HEK293 (cell line): ENCODE measurements at regions of chr16 and their contacts with region 1.

Region 1: DNA sequence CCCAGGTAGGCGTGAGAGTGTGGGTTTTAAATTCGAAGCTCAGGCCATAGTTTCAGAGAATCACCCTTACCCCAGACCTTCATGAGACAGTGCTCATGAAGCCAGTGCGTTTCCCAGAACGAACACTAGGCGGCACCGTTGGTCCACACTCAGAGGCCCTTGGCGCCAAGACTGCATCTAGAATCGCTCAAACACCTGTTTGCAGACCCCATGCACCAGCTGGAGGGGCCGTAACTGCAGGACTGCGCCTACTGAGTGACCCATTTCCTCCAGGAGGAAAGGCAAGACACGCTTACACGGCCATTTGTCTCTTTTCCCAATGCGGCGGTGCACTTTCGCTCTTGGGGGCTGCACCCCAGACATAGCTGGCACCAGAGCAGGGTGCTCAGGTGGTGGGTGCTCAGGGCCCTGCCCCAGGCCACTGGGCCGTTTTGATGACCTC is 34.0 kb downstream of the ADGRG5 start:
- H3K4me3 ChIP-seq: no peak overlapping the region
- H3K27ac ChIP-seq: no peak overlapping the region
- H3K4me1 ChIP-seq: no peaks in the 10 kb centered on the region
- CTCF ChIP-seq: peak; percentile 93

Region 2: DNA sequence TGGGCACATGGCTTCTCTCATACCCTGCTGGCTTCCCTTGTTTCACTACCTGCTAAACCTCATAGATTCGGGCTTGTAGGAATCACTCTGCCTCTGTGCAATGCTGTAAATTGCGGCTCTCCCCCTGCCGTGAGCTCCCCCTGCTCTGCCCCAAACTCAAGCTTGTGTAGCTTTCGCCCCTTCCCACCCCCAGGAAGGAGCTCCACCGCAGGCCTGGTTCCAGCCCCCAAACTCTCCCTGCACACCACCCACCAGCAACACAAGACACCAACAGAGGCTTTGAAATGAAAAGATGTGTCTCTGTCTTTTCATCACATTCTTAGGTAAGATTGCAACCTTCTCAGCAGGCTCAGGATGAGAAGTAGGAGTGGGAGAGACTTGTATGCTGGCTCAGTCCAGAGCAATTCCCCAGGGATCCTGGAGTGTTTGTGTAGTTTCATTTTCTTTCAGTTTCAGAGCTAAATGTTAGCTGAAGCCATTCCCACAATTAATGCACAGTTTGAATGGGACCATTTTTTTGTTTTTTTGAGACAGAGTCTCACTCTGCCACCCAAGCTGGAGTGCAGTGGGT is 190.0 kb before region 1 on chr16:
- CTCF ChIA-PET with region 1: no interaction called
- POLR2A ChIA-PET with region 1: no interaction called
- H3K4me3 ChIP-seq: no peak overlapping the region
- H3K27ac ChIP-seq: no peak overlapping the region
- H3K4me1 ChIP-seq: no peaks in the 10 kb centered on the region
- CTCF ChIP-seq: no peak

Region 3: GRCh38 chr16:57555831-57556230 is 20.6 kb before region 1 on chr16:
- CTCF ChIA-PET with region 1: interaction called, 11 read pairs
- POLR2A ChIA-PET with region 1: no interaction called
- H3K4me3 ChIP-seq: no peak overlapping the region
- H3K27ac ChIP-seq: no peak overlapping the region
- H3K4me1 ChIP-seq: no peaks in the 10 kb centered on the region
- CTCF ChIP-seq: no peak

Region 4: GRCh38 chr16:57564571-57565270 is 11.7 kb before region 1 on chr16:
- CTCF ChIA-PET with region 1: interaction called, 11 read pairs
- POLR2A ChIA-PET with region 1: no interaction called
- H3K4me3 ChIP-seq: no peak overlapping the region
- H3K27ac ChIP-seq: no peak overlapping the region
- H3K4me1 ChIP-seq: no peaks in the 10 kb centered on the region
- CTCF ChIP-seq: no peak

Region 5: GRCh38 chr16:57591086-57591869 is 14.8 kb after region 1 on chr16:
- CTCF ChIA-PET with region 1: interaction called, 19 read pairs
- POLR2A ChIA-PET with region 1: no interaction called
- H3K4me3 ChIP-seq: no peak overlapping the region
- H3K27ac ChIP-seq: no peak overlapping the region
- H3K4me1 ChIP-seq: no peaks in the 10 kb centered on the region
- CTCF ChIP-seq: peak; percentile 92

Region 6: GRCh38 chr16:57600048-57600835 is 23.8 kb after region 1 on chr16:
- CTCF ChIA-PET with region 1: interaction called, 19 read pairs
- POLR2A ChIA-PET with region 1: no interaction called
- H3K4me3 ChIP-seq: no peak overlapping the region
- H3K27ac ChIP-seq: no peak overlapping the region
- H3K4me1 ChIP-seq: no peaks in the 10 kb centered on the region
- CTCF ChIP-seq: peak; percentile 57